WTC11 (cell line): ENCODE measurements at regions of chr2 and their contacts with region 1.

Region 1: DNA sequence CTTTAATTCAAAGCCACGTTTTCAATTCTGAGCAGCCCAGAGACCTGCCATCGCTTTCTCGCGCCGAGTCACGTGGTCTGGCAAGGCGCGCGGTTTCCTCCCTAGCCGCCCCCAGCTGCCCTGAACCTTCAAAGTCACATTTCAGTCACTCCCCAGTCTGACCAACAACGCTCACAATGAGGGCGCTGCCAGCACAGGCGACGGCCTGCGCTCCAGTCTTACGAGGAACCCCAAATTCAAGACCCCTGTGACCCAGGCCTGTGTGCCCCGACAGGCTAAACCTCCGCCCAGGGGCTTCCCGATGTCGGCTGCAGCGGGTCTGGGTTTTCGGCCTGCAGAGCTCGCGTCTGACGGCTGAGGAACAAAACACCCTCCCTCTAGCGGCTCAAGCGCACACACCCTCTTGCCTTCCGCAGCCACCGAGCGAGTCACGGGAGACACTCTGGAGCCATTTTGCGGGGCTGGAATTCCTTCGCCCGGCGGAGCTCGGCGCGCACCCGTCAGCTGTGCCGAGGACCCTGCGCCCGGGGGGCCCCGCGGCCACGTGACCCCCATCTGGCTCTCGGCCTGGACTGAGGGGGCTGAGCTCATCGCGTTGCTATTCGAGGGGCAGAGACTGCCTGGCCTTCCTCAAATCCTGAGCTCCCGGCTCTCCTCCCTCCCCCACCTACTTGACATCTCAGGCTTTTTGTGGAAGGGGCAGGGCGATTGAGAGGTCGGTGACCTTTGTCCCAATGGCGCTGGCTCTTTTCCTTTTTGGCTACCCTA is 69.9 kb upstream of the ITGB6 start:
- DNase-seq: peak; percentile 79
- ATAC-seq: peak; percentile 79
- H3K4me3 Mint-ChIP-seq: peak overlapping the region; percentile 72
- H3K27ac Mint-ChIP-seq: peak overlapping the region; percentile 92
- H3K4me1 Mint-ChIP-seq: peaks cover 36% of the 10 kb centered on the region
- H3K27me3 Mint-ChIP-seq: peaks cover 24% of the 10 kb centered on the region
- CTCF ChIP-seq: no peak

Region 2: DNA sequence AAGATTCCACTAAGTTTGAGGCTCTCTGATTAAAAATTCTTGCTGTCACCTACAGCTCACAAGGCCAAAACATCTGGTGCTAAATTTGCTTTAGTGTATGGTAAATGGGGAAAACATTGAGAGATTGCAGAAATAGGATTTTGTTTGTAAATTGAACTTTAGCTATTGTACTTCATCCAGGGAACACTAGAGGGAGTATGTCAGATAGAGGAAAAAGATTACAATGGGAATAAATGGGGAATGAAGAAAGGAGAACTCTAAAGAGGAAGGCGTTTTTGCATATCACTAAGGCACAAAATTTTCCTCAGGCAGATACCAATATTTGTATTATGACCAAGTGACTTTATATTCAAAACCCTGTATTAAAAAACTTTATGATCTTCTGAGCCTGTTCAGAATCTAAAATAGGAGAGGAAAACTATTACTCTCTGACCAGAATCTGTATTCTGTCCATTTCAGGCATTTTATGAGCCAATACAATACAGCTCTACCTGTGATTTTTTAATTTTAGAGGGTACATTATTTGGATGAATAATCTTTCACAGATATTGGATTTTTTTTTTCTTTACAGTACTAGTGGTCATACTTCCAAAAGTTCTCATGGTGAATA is 17.6 kb before region 1 on chr2:
- CTCF ChIA-PET with region 1: interaction called, 21 read pairs
- POLR2A ChIA-PET with region 1: no interaction called
- DNase-seq: no peak
- ATAC-seq: peak; percentile 18; the same call in 1 of the 2 replicates
- H3K4me3 Mint-ChIP-seq: no peak overlapping the region
- H3K27ac Mint-ChIP-seq: no peak overlapping the region
- H3K4me1 Mint-ChIP-seq: 0 out of 2 replicates have a peak, but pooled peaks cover 5% of the 10 kb centered on the region
- H3K27me3 Mint-ChIP-seq: no peaks in the 10 kb centered on the region
- CTCF ChIP-seq: peak; percentile 54; the same call in 1 of the 2 replicates

Region 3: DNA sequence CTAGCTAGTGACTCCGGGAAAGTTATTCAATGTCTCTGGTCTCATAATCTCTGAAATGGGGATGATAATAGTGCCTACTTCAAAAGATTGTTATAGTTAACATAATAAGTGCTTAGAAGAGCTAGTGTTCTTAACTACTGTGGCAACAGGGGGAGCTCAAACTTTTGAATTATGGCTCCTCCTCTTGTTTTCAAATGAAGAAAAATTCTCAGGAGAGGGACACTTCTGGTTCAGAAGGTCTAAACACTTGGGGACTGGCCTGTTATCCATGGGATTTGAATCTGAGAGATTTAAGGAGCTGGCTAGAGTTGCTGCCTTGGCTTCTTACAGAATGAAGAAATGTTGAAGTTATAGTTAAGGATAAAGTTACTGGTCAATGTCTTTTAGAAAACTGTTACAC is 22.2 kb after region 1 on chr2:
- CTCF ChIA-PET with region 1: interaction called, 14 read pairs
- POLR2A ChIA-PET with region 1: interaction called, 3 read pairs
- DNase-seq: no peak
- ATAC-seq: no peak
- H3K4me3 Mint-ChIP-seq: no peak overlapping the region
- H3K27ac Mint-ChIP-seq: no peak overlapping the region
- H3K4me1 Mint-ChIP-seq: peaks cover 8% of the 10 kb centered on the region; the same call in 1 of the 2 replicates
- H3K27me3 Mint-ChIP-seq: no peaks in the 10 kb centered on the region
- CTCF ChIP-seq: no peak

Region 4: GRCh38 chr2:160970052-160970965 is 700.3 kb after region 1 on chr2:
- CTCF ChIA-PET with region 1: interaction called, 11 read pairs
- POLR2A ChIA-PET with region 1: no interaction called
- DNase-seq: peak; percentile 29
- ATAC-seq: peak; percentile 91
- H3K4me3 Mint-ChIP-seq: no peak overlapping the region
- H3K27ac Mint-ChIP-seq: peak overlapping the region; percentile 94
- H3K4me1 Mint-ChIP-seq: peaks cover 8% of the 10 kb centered on the region
- H3K27me3 Mint-ChIP-seq: no peaks in the 10 kb centered on the region; the same call in 1 of the 2 replicates
- CTCF ChIP-seq: no peak